PC-3 (cell line): ENCODE measurements at regions of chr7 and their contacts with region 1.

Region 1: GRCh38 chr7:39517240-39517639 is 49.0 kb upstream of the YAE1 start:
- DNase-seq: no peak
- ATAC-seq: no peak
- H3K4me3 ChIP-seq: no peak overlapping the region
- H3K27ac ChIP-seq: no peak overlapping the region
- H3K4me1 ChIP-seq: no peaks in the 10 kb centered on the region
- H3K27me3 ChIP-seq: peaks cover 29% of the 10 kb centered on the region
- CTCF ChIP-seq: no peak

Region 2: GRCh38 chr7:38398725-38399321 is 1118.4 kb before region 1 on chr7:
- CTCF ChIA-PET with region 1: no interaction called
- POLR2A ChIA-PET with region 1: no interaction called
- intact Hi-C with region 1: loop called (anchors 1 kb)
- DNase-seq: peak; percentile 52
- ATAC-seq: peak; percentile 68
- H3K4me3 ChIP-seq: no peak overlapping the region
- H3K27ac ChIP-seq: no peak overlapping the region
- H3K4me1 ChIP-seq: no peaks in the 10 kb centered on the region
- H3K27me3 ChIP-seq: peaks cover 4% of the 10 kb centered on the region; the same call in 1 of the 2 replicates
- CTCF ChIP-seq: peak; percentile 79

Region 3: GRCh38 chr7:38796626-38797501 is 720.4 kb before region 1 on chr7:
- CTCF ChIA-PET with region 1: no interaction called
- POLR2A ChIA-PET with region 1: no interaction called
- intact Hi-C with region 1: loop called (anchors 1 kb)
- DNase-seq: peak; percentile 77
- ATAC-seq: peak; percentile 53
- H3K4me3 ChIP-seq: no peak overlapping the region
- H3K27ac ChIP-seq: no peak overlapping the region
- H3K4me1 ChIP-seq: no peaks in the 10 kb centered on the region
- H3K27me3 ChIP-seq: no peaks in the 10 kb centered on the region
- CTCF ChIP-seq: peak; percentile 89

Region 4: GRCh38 chr7:38932509-38933168 is 584.6 kb before region 1 on chr7:
- CTCF ChIA-PET with region 1: no interaction called
- POLR2A ChIA-PET with region 1: no interaction called
- intact Hi-C with region 1: loop called (anchors 1 kb)
- DNase-seq: peak; percentile 63
- ATAC-seq: peak; percentile 38; the same call in 1 of the 2 replicates
- H3K4me3 ChIP-seq: no peak overlapping the region
- H3K27ac ChIP-seq: no peak overlapping the region
- H3K4me1 ChIP-seq: no peaks in the 10 kb centered on the region
- H3K27me3 ChIP-seq: peaks cover 17% of the 10 kb centered on the region; the same call in 1 of the 2 replicates
- CTCF ChIP-seq: peak; percentile 95

Region 5: DNA sequence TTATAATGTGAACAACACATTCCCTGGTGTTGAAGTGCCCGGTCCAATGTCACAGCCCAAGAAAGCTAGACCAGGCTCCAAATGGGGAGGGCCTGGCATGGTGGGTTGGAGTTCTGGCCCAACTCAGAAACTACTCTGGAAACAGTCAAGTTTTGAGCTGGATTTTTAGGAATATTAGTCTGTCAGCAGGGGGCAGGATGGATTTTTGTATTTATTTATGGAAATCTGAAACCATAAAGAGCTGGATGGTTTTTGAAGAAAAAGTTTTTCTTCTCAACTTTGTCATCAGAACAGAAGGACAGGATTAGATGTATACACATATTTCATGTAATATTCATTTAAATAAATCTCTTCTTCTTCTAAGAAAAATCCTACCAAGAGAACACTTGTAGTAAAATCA is 442.0 kb before region 1 on chr7:
- CTCF ChIA-PET with region 1: no interaction called
- POLR2A ChIA-PET with region 1: no interaction called
- intact Hi-C with region 1: loop called (anchors 1 kb)
- DNase-seq: peak; percentile 25
- ATAC-seq: no peak
- H3K4me3 ChIP-seq: no peak overlapping the region
- H3K27ac ChIP-seq: no peak overlapping the region
- H3K4me1 ChIP-seq: no peaks in the 10 kb centered on the region
- H3K27me3 ChIP-seq: peaks cover 45% of the 10 kb centered on the region
- CTCF ChIP-seq: peak; percentile 37; the same call in 1 of the 2 replicates

Region 6: DNA sequence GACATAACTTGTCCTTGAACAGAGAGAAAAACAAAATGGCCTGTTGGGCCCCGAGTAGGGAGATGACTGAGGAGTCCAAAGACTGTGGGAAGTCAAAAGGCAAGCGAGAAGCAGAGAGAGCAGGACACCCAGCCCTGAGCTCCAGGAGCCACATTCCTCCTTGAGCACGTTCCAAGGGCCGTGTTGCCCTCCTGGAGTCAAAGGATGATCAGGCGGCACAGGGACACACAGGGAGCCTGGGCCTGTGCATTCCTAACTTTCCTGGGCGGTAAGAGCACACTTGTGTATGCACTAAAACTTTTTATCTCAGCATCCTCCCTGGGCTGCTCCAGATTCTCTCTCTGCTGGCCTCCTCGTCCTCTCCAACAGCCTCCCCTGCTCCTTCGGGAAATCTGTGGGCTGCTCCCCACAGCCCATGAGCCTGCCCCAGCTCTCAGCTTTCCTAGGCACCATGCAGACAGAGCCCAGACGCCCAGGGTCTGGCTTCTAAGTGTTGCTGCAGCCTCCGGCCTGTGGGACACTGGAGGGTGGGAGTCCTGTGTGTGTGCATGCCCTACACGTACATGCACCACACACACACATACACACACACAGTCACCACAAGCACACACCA is 257.7 kb before region 1 on chr7:
- CTCF ChIA-PET with region 1: no interaction called
- POLR2A ChIA-PET with region 1: no interaction called
- intact Hi-C with region 1: no loop called
- DNase-seq: no peak
- ATAC-seq: no peak
- H3K4me3 ChIP-seq: no peak overlapping the region
- H3K27ac ChIP-seq: no peak overlapping the region
- H3K4me1 ChIP-seq: no peaks in the 10 kb centered on the region
- H3K27me3 ChIP-seq: peaks cover 78% of the 10 kb centered on the region
- CTCF ChIP-seq: no peak

Region 7: DNA sequence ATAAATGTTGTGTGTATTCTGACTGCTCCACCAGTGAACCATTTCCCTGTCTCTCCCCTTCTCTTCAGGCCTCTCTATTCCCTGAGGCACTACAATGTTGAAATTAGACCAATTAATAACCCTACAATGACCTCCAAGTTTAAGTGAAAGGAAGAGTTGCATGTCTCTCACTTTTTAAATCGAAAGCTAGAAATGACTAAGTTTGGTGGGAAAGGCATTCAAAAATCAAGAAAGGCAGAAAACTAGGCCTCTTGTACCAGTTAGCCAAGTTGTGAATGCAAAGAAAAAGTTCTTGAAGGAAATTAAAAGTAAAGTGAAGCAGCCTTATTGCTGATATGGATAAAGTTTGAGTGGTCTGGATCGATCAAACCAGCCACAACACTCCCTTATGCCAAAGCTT is 149.3 kb before region 1 on chr7:
- CTCF ChIA-PET with region 1: no interaction called
- POLR2A ChIA-PET with region 1: no interaction called
- intact Hi-C with region 1: no loop called
- DNase-seq: no peak
- ATAC-seq: no peak
- H3K4me3 ChIP-seq: no peak overlapping the region
- H3K27ac ChIP-seq: no peak overlapping the region
- H3K4me1 ChIP-seq: no peaks in the 10 kb centered on the region
- H3K27me3 ChIP-seq: peaks cover 15% of the 10 kb centered on the region
- CTCF ChIP-seq: no peak